CD4-positive, alpha-beta T cell (primary cell): ENCODE measurements at regions of chr17 and their contacts with region 1.

Region 1: DNA sequence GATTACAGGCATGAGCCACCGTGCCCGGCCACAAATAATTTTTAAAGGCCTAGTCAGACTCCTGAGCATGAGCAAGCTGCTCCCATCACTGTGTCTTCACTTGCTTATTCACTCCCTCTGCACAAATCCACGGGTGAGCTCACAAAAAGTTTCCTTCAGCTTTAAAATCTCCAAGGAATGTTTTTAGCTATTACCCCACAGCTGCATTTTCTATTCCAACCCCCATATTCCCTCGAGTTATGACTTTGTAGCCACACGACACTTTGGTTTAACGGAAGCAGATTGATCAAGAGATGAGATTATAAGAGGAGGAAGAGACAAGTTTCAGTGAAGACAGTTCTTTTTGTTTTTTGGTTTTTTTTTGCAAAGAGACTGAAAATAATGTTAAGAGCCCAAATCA is 49.1 kb upstream of the SLC25A19 start:
- DNase-seq: peak in 3 of 14 experiments; percentile 44 to 56 (median 49)
- ATAC-seq: peak; percentile 54
- H3K4me3 ChIP-seq: peak overlapping the region; percentile 30
- H3K4me3 Mint-ChIP-seq: peak overlapping the region; percentile 59
- H3K27ac ChIP-seq: peak overlapping the region; percentile 38 to 47
- H3K27ac Mint-ChIP-seq: peak overlapping the region; percentile 81
- H3K4me1 ChIP-seq: peaks cover 79% of the 10 kb centered on the region
- H3K4me1 Mint-ChIP-seq: peaks cover 74% of the 10 kb centered on the region
- H3K27me3 ChIP-seq: no peaks in the 10 kb centered on the region
- H3K27me3 Mint-ChIP-seq: no peaks in the 10 kb centered on the region
- CTCF ChIP-seq: no peak

Region 2: DNA sequence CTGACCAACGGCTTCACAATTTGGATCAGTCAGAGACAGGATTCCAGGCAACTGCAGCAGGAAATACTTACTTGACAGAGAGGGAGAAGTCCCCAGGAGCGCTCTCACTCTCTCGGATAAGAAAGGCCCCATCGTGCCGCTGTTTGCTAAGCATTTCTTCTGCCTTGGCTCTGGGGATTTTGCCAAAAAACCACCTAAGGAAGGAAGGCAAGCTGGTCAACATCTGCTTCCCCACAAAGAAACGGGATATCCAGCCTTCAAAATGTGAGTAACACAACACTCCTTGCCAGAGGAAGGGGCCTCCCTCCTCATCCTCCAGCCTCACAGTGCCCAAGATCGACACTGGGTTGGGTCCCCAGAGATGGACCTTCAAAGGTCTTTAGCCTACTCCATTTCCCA is 12.5 kb before region 1 on chr17:
- CTCF ChIA-PET with region 1: interaction called, 14 read pairs
- POLR2A ChIA-PET with region 1: interaction called, 31 read pairs
- intact Hi-C with region 1: no loop called
- DNase-seq: peak in 2 of 14 experiments; percentile 50 to 55
- ATAC-seq: no peak
- H3K4me3 ChIP-seq: no peak overlapping the region
- H3K4me3 Mint-ChIP-seq: no peak overlapping the region
- H3K27ac ChIP-seq: peak overlapping the region; percentile 34 to 36
- H3K27ac Mint-ChIP-seq: peak overlapping the region; percentile 18
- H3K4me1 ChIP-seq: peaks cover 25% of the 10 kb centered on the region
- H3K4me1 Mint-ChIP-seq: peaks cover 35% of the 10 kb centered on the region
- H3K27me3 ChIP-seq: no peaks in the 10 kb centered on the region
- H3K27me3 Mint-ChIP-seq: no peaks in the 10 kb centered on the region
- CTCF ChIP-seq: no peak

Region 3: GRCh38 chr17:75371339-75371738 is 33.0 kb after region 1 on chr17:
- CTCF ChIA-PET with region 1: interaction called, 5 read pairs
- POLR2A ChIA-PET with region 1: interaction called, 3 read pairs
- intact Hi-C with region 1: loop called (anchors 5 kb)
- DNase-seq: peak in 3 of 14 experiments; percentile 37 to 48 (median 40)
- ATAC-seq: peak; percentile 38
- H3K4me3 ChIP-seq: no peak overlapping the region
- H3K4me3 Mint-ChIP-seq: peak overlapping the region; percentile 47
- H3K27ac ChIP-seq: no peak overlapping the region
- H3K27ac Mint-ChIP-seq: peak overlapping the region; percentile 86
- H3K4me1 ChIP-seq: peaks cover 57% of the 10 kb centered on the region
- H3K4me1 Mint-ChIP-seq: peaks cover 79% of the 10 kb centered on the region
- H3K27me3 ChIP-seq: no peaks in the 10 kb centered on the region
- H3K27me3 Mint-ChIP-seq: no peaks in the 10 kb centered on the region
- CTCF ChIP-seq: no peak

Region 4: GRCh38 chr17:75393523-75394331 is 55.4 kb after region 1 on chr17:
- CTCF ChIA-PET with region 1: interaction called, 3 read pairs
- POLR2A ChIA-PET with region 1: interaction called, 25 read pairs
- intact Hi-C with region 1: no loop called
- DNase-seq: peak; percentile 37 to 92 (median 77)
- ATAC-seq: peak; percentile 86
- H3K4me3 ChIP-seq: peak overlapping the region; percentile 68
- H3K4me3 Mint-ChIP-seq: peak overlapping the region; percentile 92
- H3K27ac ChIP-seq: peak overlapping the region; percentile 23 to 63
- H3K27ac Mint-ChIP-seq: peak overlapping the region; percentile 91
- H3K4me1 ChIP-seq: peaks cover 52% of the 10 kb centered on the region
- H3K4me1 Mint-ChIP-seq: peaks cover 88% of the 10 kb centered on the region
- H3K27me3 ChIP-seq: no peaks in the 10 kb centered on the region
- H3K27me3 Mint-ChIP-seq: no peaks in the 10 kb centered on the region
- CTCF ChIP-seq: no peak